ENCODE measurements at regions of chr17 and their contacts with region 1.

Region 1: DNA sequence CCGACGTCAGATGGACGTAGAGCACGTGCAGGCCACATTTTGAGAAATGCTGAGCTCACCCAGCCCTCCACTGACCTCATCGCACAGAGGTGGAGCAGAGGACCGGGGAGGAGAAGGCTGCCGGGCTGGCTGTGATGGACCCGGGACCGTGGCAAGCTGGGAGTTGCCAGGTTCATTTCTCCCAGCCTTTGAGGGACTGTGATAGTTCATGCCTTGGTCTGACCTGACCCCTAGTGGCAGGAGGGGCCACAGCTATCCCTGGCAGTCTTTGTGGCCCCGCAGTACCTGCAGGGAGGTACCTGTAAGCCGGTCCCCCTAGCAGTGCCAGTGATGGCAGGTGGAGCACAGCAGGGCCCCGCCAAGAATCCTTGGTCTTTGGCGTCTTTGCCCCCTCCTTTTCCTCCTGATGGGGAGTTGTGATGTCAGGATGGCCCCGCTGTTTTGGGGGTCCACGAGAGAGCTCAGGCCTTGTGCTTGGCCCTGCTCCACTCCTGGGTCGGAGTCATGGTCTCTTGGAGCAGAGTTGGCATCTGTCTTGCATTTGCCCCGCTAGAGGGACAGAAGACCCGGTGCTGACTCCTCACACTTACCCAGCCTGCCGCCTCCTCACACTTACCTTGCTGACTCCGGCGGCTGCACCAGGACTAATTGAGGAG is 50.4 kb downstream of the OR1D5 start:
- DNase-seq: peak; percentile 20
- H3K4me3 Mint-ChIP-seq: no peak overlapping the region
- H3K27ac Mint-ChIP-seq: no peak overlapping the region
- H3K4me1 Mint-ChIP-seq: no peaks in the 10 kb centered on the region
- H3K27me3 Mint-ChIP-seq: no peaks in the 10 kb centered on the region

Region 2: GRCh38 chr17:2828397-2829038 is 184.5 kb before region 1 on chr17:
- intact Hi-C with region 1: loop called (anchors 1 kb)
- DNase-seq: peak; percentile 67
- H3K4me3 Mint-ChIP-seq: no peak overlapping the region
- H3K27ac Mint-ChIP-seq: no peak overlapping the region
- H3K4me1 Mint-ChIP-seq: peaks cover 15% of the 10 kb centered on the region
- H3K27me3 Mint-ChIP-seq: peaks cover 8% of the 10 kb centered on the region

Region 3: GRCh38 chr17:2847381-2848333 is 165.4 kb before region 1 on chr17:
- intact Hi-C with region 1: loop called (anchors 5 kb)
- DNase-seq: no peak
- H3K4me3 Mint-ChIP-seq: no peak overlapping the region
- H3K27ac Mint-ChIP-seq: no peak overlapping the region
- H3K4me1 Mint-ChIP-seq: peaks cover 12% of the 10 kb centered on the region
- H3K27me3 Mint-ChIP-seq: peaks cover 18% of the 10 kb centered on the region

Region 4: DNA sequence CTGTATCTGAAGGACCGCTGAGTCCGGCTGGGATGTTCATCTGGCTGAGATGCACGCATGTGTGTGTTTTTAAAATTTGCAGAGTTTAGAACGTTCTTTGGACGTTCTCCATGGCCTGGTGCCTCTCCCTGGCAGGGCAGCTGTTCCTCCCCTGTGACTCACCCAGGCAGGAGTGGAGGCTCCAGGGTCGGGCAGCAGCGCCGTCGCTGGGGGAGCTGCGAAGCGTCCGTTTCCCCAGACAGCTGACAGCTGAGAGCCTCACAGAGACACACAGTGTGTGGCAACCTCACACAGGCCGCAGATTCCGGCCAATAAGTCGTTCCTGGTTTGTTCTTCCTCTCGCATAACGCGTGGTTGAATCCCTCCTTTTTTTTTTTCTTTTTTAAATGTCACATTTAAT is 30.2 kb before region 1 on chr17:
- intact Hi-C with region 1: no loop called
- DNase-seq: no peak
- H3K4me3 Mint-ChIP-seq: no peak overlapping the region
- H3K27ac Mint-ChIP-seq: no peak overlapping the region
- H3K4me1 Mint-ChIP-seq: no peaks in the 10 kb centered on the region
- H3K27me3 Mint-ChIP-seq: no peaks in the 10 kb centered on the region

Measured in activated T-helper 2 cell treated with anti-CD3 and anti-CD28 coated beads, Interferon-gamma antibody, Interleukin-2, Interleukin-4, amounts not matched to agents 10 μg/mL and 5 μg/mL and 100 μg/mL, durations not matched to agents 14 hours and 24 hours and 36 hours (primary cell).